Activated naive CD4-positive, alpha-beta T cell treated with anti-CD3 and anti-CD28 coated beads for 36 hours (primary cell): ENCODE measurements at regions of chr5 and their contacts with region 1.

Region 1: DNA sequence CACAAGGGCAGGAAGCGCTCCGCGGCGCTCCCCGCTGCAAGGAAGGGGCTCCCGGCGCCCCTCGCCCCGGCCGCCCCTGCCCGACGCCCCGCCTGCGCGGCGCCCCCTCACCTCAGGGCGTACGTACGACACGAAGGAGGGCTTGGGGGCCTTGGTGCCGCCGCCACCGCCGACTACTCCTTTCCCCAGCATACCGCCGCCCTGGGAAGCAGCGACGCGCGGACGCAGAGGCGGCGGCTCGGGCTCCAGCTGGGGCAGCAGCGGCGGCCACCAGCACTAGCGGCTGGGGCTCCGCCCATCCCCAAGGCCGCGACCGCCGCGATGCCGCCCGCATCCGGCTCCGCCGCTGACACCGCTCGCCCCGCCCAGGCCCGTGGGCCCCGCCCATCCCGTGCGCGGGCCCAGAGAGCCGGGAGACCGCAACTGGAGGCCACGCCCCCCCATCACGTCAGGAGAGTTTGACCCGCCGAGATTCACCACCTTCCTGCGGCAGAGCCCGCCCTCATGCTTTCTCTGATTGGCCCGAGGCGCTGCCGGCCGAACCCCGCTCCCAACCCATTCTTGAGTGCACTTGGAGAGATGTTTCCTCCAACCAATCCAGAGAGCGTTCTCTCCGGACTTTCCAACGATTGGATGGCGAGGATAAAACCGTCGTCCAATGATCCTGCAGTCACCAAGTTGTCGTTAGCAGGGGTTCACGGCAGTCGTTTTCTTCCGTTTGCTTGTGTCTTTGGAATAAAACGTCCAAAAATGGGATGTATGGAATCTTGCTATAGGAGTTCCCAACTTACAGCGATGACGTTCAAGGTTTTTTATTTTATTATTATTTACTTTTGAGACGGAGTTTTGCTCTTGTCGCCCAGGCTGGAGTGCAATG is at the start of gene MTMR12:
- DNase-seq: peak; percentile 100
- H3K4me3 Mint-ChIP-seq: peak within 1 kb of the TSS; percentile 84
- H3K27ac Mint-ChIP-seq: peak within 1 kb of the TSS; percentile 84
- H3K4me1 Mint-ChIP-seq: peaks cover 27% of the 10 kb centered on the region
- H3K27me3 Mint-ChIP-seq: no peaks in the 10 kb centered on the region
- total RNA-seq, gene MTMR12: 14.1 to 16.0 TPM

Region 2: GRCh38 chr5:31531888-31532710 is 780.8 kb before region 1 on chr5 and contains the starts of genes C5orf22 and DROSHA:
- CTCF ChIA-PET with region 1: no interaction called
- intact Hi-C with region 1: loop called (anchors 1 kb)
- DNase-seq: peak; percentile 95
- H3K4me3 Mint-ChIP-seq: peak within 1 kb of the TSS; percentile 87
- H3K27ac Mint-ChIP-seq: peak within 1 kb of the TSS; percentile 80
- H3K4me1 Mint-ChIP-seq: peaks cover 41% of the 10 kb centered on the region
- H3K27me3 Mint-ChIP-seq: no peaks in the 10 kb centered on the region
- total RNA-seq, gene C5orf22: 23.7 to 25.5 TPM
- total RNA-seq, gene DROSHA: 60.7 to 60.9 TPM

Region 3: GRCh38 chr5:32138839-32139493 is 173.9 kb before region 1 on chr5:
- CTCF ChIA-PET with region 1: no interaction called
- intact Hi-C with region 1: no loop called
- DNase-seq: peak; percentile 62
- H3K4me3 Mint-ChIP-seq: no peak overlapping the region
- H3K27ac Mint-ChIP-seq: peak overlapping the region; percentile 22
- H3K4me1 Mint-ChIP-seq: peaks cover 20% of the 10 kb centered on the region
- H3K27me3 Mint-ChIP-seq: no peaks in the 10 kb centered on the region

Region 4: DNA sequence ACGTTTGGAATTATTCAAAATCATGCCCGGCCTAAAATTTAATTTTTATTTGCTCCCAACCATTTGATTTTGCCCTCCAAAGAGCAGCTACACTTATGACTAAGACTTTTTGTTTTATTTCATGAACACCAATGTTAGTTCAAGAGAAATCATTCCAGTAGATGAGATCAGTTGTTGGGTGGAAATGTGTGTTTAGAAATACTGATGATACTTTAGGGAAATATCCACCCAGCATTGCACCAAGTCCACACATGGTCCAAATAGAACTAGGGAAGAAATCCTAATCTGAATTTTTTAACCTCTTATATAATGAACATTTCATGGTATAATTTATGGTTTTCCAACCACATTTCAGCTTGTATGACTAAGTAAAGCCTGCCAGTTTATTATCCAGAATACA is 110.5 kb before region 1 on chr5:
- CTCF ChIA-PET with region 1: no interaction called
- intact Hi-C with region 1: no loop called
- DNase-seq: no peak
- H3K4me3 Mint-ChIP-seq: no peak overlapping the region
- H3K27ac Mint-ChIP-seq: no peak overlapping the region
- H3K4me1 Mint-ChIP-seq: peaks cover 33% of the 10 kb centered on the region
- H3K27me3 Mint-ChIP-seq: peaks cover 3% of the 10 kb centered on the region

Region 5: DNA sequence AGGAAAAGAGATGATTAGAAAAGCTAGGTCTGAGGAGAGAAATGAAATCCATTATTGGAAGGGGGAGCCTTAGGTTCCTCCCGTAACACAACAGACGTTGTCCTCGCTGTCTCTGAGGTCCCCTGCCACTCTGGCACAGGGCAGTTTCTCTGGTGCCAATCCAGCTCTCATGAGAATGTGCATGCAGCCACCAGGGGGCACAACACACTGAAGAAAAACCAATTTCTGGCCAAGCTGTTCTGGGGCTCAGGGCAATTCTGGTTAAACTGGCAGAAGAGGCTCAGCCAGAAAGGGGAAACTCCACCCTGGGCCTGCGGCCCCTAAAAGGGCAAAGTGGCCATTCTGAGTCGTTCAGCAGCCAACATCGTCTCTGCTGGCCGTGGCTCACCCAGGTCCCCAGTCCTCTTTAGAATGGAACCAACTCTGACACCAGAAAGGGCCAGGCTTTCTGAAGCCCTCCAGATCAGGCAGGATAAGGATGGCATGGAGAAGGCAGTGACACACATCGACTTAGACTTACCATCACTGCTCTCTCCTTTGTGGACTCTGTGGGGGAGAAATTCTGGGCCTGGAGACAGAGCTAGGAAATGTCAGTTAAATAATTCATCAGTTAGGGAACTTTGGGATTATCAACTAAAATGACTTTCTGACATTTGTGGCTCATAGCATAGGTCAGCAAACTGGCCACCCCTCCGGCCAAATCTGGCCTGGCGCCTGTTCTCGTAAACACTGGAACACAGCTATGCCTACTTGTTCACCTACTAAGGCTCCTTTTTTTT is 80.3 kb before region 1 on chr5:
- CTCF ChIA-PET with region 1: interaction called, 3 read pairs
- intact Hi-C with region 1: loop called (anchors 5 kb)
- DNase-seq: peak; percentile 88
- H3K4me3 Mint-ChIP-seq: no peak overlapping the region
- H3K27ac Mint-ChIP-seq: no peak overlapping the region
- H3K4me1 Mint-ChIP-seq: peaks cover 7% of the 10 kb centered on the region
- H3K27me3 Mint-ChIP-seq: no peaks in the 10 kb centered on the region

Region 6: DNA sequence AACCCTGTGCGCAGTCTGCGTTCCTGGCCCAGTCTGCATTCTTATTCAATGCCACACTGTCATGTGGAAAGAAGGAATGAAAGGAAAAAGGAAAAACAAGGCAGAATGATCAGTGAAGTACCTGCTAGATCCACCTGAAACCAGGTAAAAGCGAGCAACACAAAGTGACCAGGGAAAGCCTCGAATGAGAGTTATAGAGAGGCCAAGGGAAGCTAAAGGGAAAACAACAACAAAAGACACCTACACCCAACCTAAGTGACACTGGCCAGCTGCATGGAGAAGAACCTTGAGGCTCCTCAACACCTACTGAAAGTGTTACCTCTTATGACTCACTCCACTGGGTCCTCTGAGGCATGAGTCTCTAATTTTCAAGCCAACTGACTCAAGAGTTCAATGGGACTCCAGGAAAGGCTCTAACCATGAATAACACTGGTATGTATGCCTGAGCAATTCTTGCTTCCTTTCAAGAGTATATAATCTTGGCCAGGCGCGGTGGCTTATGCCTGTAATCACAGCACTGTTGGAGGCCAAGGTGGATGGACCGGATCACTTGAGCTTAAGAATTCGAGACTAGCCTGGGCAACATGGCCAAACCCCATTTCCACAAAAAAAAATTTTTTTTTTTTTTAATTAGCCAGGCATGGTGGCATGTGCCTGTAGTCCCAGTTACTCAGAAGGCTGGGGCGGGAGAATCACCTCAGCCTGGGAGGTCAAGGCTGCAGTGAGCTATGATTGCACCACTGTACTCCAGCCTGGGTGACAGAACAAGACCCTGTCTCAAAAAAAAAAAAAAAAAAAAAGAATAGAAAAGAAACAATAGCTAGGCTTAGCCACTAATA is 29.1 kb before region 1 on chr5:
- CTCF ChIA-PET with region 1: interaction called, 3 read pairs
- intact Hi-C with region 1: loop called (anchors 1 kb)
- DNase-seq: peak; percentile 46
- H3K4me3 Mint-ChIP-seq: no peak overlapping the region
- H3K27ac Mint-ChIP-seq: peak overlapping the region; percentile 37
- H3K4me1 Mint-ChIP-seq: peaks cover 41% of the 10 kb centered on the region
- H3K27me3 Mint-ChIP-seq: no peaks in the 10 kb centered on the region

Region 7: DNA sequence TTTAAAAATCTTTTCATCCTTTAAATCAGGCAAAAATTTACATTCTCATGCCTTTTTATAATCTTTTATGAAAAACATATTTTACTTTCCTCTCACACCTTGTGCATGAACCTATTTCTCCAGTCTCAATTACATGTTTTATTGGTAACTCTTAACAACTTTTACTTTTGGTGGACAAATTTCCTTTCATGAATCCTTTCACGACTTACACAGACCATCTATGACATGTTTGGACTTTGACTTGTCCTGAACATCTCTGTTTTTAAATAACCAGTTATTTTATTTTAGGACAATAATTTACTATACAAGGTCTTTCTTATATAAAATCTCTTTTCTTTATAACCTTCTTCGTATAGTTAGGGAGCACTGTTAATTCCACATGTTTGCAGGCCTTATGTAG is 26.3 kb after region 1 on chr5:
- CTCF ChIA-PET with region 1: no interaction called
- intact Hi-C with region 1: no loop called
- DNase-seq: no peak
- H3K4me3 Mint-ChIP-seq: no peak overlapping the region
- H3K27ac Mint-ChIP-seq: no peak overlapping the region
- H3K4me1 Mint-ChIP-seq: no peaks in the 10 kb centered on the region
- H3K27me3 Mint-ChIP-seq: peaks cover 3% of the 10 kb centered on the region

Region 8: DNA sequence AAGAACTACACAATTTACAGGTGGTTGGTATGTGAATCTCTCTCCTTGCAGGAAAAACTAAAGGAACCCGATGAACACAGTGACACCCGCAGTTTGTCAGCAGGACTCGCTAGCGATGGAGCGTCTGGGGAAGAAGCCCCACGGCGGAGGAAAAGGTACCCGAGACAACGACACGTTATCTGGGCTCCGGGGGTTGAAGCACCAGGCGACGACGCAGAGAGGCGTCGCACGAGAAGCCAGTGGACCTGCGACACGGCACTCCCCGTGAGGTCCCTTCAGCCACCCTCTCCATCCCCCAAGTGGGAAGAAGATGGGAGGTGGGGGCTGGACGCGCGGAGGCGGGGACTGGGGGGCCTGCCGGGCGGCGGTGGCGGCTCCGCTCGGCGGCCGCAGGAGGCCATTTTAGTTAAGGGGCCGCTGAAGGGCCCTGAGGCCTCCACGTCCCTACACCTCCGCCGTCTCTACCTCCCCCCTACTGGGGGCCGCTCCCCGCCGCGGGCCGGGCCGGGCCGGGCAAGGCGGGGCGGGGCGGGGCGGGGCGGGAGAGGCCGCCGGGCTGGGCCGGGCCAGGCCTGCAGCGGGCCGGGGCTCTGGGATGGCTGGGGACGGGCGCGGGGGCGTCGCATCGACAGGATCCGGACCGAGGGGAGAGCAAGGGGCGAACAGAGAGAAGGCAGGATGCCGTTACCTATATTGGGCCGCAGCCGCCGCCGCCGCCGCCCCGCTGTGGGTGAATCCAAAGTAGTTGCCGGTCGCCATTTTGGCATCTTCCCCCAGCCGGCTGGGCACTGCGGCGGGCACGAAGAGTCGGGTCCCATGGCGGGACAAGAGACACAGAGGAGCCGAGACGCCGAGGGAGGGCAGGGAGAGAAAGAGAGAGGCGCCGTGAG is 130.9 kb after region 1 on chr5:
- CTCF ChIA-PET with region 1: no interaction called
- intact Hi-C with region 1: loop called (anchors 1 kb)
- DNase-seq: peak; percentile 50
- H3K4me3 Mint-ChIP-seq: peak overlapping the region; percentile 93
- H3K27ac Mint-ChIP-seq: peak overlapping the region; percentile 96
- H3K4me1 Mint-ChIP-seq: peaks cover 35% of the 10 kb centered on the region
- H3K27me3 Mint-ChIP-seq: no peaks in the 10 kb centered on the region